ENCODE measurements at regions of chr2 and their contacts with region 1.

Region 1: DNA sequence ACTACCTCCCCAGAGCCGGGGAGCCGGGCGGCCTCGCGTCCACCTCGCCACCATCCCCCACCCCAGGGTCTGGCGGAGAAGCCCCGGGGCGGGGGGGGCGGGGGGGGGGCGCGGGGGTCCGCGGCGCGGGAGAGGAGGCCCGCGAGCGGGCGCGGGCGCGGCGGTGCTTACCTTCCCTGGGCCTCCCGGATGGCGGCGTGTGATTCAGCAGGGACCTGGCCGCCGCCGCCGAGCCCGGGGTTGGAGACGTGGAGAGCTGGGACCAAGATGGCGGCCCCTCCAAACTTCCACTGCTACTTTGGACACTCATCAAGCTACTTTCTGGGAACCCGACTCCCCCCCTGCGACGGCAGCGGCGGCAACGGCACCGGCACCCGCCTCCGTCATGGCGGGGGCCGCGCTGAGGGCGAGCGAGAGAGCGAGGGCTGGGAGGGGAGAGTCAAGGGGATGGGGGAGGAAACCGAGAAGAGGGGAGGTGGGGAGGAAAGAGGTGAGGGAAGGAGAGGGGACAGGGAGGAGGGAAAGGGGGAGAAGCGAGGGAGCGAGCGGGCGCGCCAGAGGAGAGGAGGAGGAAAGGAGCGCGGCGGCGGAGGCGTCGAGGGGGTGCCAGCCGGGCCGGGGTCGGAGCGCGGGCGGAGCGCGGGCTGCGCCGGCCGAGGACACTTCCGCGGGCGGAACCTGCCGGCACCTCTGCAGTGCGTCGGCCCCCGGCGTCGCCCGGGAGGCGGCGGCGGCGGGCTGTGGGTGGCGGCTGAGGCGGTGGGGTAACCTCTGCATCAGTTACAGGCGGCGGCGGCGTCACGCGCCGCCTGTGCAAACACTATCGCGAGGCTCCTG is at the start of gene TLK1:
- DNase-seq: peak; percentile 78 to 84 (median 82)
- H3K4me3 ChIP-seq: peak within 1 kb of the TSS; percentile 78 to 95
- H3K4me3 Mint-ChIP-seq: peak within 1 kb of the TSS; percentile 94 to 99 (median 96)
- H3K27ac ChIP-seq: peak within 1 kb of the TSS; percentile 89
- H3K27ac Mint-ChIP-seq: peak within 1 kb of the TSS; percentile 93 to 98 (median 94)
- H3K4me1 ChIP-seq: peaks cover 72% of the 10 kb centered on the region
- H3K4me1 Mint-ChIP-seq: peaks cover 51 to 77% (median 61%) of the 10 kb centered on the region in 4 donors
- H3K27me3 ChIP-seq: no peaks in the 10 kb centered on the region
- H3K27me3 Mint-ChIP-seq: no peaks in the 10 kb centered on the region
- total RNA-seq, gene TLK1: 138 to 152 TPM

Region 2: DNA sequence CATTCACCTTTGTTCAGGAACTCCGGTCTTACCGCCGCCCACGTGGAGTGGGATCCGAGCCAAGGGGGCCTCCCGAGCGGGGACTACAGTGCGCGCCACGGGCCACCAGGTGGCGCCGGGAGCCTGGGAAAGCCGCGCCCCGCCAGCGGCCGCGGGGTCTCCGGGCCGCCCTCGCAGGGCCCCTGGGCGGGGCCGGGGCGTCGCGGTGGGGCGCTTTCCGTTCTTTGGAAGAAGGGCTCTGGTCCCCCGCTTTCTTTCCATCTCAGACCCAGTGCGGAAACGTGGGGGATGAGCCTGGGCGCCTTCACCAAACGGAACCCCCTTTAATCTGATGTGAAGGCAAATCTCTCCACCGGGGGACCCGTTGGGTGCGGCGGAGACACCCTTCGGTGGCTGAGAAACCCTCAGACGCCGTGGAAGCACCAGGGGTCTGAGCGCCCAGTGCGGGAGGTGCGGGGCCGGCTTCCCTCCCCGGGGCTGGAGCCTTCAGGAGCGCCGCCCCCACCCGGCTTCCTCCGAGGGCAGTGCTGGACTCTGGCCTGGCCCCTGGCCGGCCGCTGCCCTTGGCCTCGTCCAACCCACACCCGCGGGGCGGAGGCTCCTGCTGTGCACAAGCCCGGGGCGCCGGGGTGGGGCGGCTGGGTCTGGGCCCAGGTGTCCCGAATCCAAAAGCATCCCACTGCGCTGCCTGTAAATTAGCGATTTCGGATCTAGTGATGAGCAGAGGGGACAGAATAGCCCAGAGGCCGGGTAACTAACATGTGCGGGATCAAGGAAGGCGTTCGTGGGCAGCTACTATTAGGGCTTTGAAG is 186.6 kb before region 1 on chr2:
- CTCF ChIA-PET with region 1: interaction called, 35 read pairs
- POLR2A ChIA-PET with region 1: interaction called, 32 read pairs
- intact Hi-C with region 1: loop called (anchors 1 kb)
- DNase-seq: peak; percentile 87 to 91 (median 87)
- H3K4me3 ChIP-seq: peak overlapping the region; percentile 26 to 77
- H3K4me3 Mint-ChIP-seq: peak overlapping the region; percentile 81 to 88 (median 84)
- H3K27ac ChIP-seq: peak overlapping the region; percentile 52
- H3K27ac Mint-ChIP-seq: peak overlapping the region; percentile 25 to 90 (median 54)
- H3K4me1 ChIP-seq: peaks cover 14% of the 10 kb centered on the region
- H3K4me1 Mint-ChIP-seq: peaks cover 7 to 16% (median 10%) of the 10 kb centered on the region in 4 donors
- H3K27me3 ChIP-seq: no peaks in the 10 kb centered on the region
- H3K27me3 Mint-ChIP-seq: no peaks in the 10 kb centered on the region

Region 3: GRCh38 chr2:171124541-171124940 is 35.8 kb before region 1 on chr2:
- CTCF ChIA-PET with region 1: no interaction called
- POLR2A ChIA-PET with region 1: interaction called, 3 read pairs
- intact Hi-C with region 1: loop called (anchors 5 kb)
- DNase-seq: no peak
- H3K4me3 ChIP-seq: no peak overlapping the region
- H3K4me3 Mint-ChIP-seq: no peak overlapping the region
- H3K27ac ChIP-seq: no peak overlapping the region
- H3K27ac Mint-ChIP-seq: no peak overlapping the region
- H3K4me1 ChIP-seq: peaks cover 44% of the 10 kb centered on the region
- H3K4me1 Mint-ChIP-seq: peaks cover 42 to 72% (median 60%) of the 10 kb centered on the region in 4 donors
- H3K27me3 ChIP-seq: no peaks in the 10 kb centered on the region
- H3K27me3 Mint-ChIP-seq: no peaks in the 10 kb centered on the region

Region 4: DNA sequence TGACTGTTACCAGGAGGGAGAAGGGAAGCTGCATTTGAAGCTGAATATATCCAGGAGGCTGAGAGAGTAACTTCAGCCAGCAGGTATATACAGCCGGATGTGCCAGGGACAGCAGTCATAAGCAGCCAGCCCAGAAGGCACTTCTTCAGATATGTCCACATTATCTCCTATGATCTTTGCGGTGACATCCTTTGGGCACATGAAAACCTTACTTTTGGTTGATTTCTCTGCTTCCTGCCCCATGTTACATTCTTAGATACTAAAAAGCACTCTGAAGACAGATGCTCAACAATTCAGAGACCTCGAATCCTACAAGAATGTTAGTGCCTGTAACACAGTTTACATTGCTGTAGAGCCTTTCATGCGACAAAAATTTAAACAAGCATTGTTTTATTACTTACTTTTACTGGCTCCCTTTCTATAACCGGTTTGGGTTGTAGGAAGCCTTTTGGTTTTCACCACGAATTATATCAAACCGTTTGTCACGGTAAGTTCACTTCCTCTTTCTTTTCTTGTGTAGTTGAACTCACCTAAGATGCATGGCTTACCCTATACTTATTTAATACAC is 50.6 kb after region 1 on chr2:
- CTCF ChIA-PET with region 1: interaction called, 3 read pairs
- POLR2A ChIA-PET with region 1: interaction called, 5 read pairs
- intact Hi-C with region 1: loop called (anchors 1 kb)
- DNase-seq: peak; percentile 56 to 76 (median 67)
- H3K4me3 ChIP-seq: peak overlapping the region in 1 of 2 donors; percentile 46
- H3K4me3 Mint-ChIP-seq: peak overlapping the region; percentile 73 to 87 (median 78)
- H3K27ac ChIP-seq: peak overlapping the region; percentile 36
- H3K27ac Mint-ChIP-seq: peak overlapping the region; percentile 62 to 90 (median 85)
- H3K4me1 ChIP-seq: peaks cover 17% of the 10 kb centered on the region
- H3K4me1 Mint-ChIP-seq: peaks cover 11 to 26% (median 15%) of the 10 kb centered on the region in 4 donors
- H3K27me3 ChIP-seq: no peaks in the 10 kb centered on the region
- H3K27me3 Mint-ChIP-seq: no peaks in the 10 kb centered on the region

Region 5: DNA sequence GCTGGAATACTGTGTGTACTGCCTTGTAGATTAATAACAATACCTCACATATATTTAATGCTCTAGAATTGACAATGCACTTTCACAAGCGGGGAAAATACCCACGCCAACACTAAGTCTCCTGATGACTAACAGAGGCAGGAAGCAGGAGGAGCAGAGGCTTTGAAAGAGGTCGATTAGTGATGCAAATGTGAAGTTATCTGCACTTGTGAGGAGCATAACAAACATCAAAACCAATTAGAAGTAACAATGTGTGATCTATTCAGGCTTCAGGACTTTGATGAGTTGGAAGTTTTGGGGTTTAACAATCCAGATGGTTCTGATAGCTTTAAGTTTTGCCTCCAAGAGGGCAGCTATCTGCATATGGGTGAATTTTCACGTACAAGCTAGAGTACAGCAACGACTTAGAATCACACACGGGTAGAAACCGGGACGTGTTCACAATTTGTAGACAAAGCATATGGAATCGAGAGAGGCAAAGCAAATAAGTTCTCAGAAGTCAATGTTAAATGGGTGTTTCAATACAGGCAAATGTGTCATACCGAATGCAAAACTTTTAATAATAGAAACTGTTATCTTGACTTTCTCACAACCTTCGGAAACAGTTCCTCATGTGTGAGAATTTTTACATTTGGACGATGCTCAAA is 158.9 kb after region 1 on chr2:
- CTCF ChIA-PET with region 1: interaction called, 6 read pairs
- POLR2A ChIA-PET with region 1: interaction called, 9 read pairs
- intact Hi-C with region 1: loop called (anchors 2 kb)
- DNase-seq: peak; percentile 47 to 75 (median 56)
- H3K4me3 ChIP-seq: no peak overlapping the region
- H3K4me3 Mint-ChIP-seq: peak overlapping the region; percentile 66 to 82 (median 77)
- H3K27ac ChIP-seq: peak overlapping the region; percentile 37
- H3K27ac Mint-ChIP-seq: peak overlapping the region; percentile 43 to 94 (median 77)
- H3K4me1 ChIP-seq: peaks cover 43% of the 10 kb centered on the region
- H3K4me1 Mint-ChIP-seq: peaks cover 41 to 51% (median 48%) of the 10 kb centered on the region in 4 donors
- H3K27me3 ChIP-seq: no peaks in the 10 kb centered on the region
- H3K27me3 Mint-ChIP-seq: no peaks in the 10 kb centered on the region

Region 6: GRCh38 chr2:171433763-171434670 is 273.7 kb after region 1 on chr2 and contains the starts of genes DCAF17 and METTL8:
- CTCF ChIA-PET with region 1: interaction called, 4 read pairs
- POLR2A ChIA-PET with region 1: interaction called, 18 read pairs
- intact Hi-C with region 1: loop called (anchors 1 kb)
- DNase-seq: peak; percentile 92 to 95 (median 94)
- H3K4me3 ChIP-seq: peak within 1 kb of the TSS; percentile 40 to 82
- H3K4me3 Mint-ChIP-seq: peak within 1 kb of the TSS; percentile 84 to 92 (median 90)
- H3K27ac ChIP-seq: peak within 1 kb of the TSS; percentile 91
- H3K27ac Mint-ChIP-seq: peak within 1 kb of the TSS; percentile 79 to 98 (median 96)
- H3K4me1 ChIP-seq: peaks cover 30% of the 10 kb centered on the region
- H3K4me1 Mint-ChIP-seq: peaks cover 32 to 52% (median 40%) of the 10 kb centered on the region in 4 donors
- H3K27me3 ChIP-seq: no peaks in the 10 kb centered on the region
- H3K27me3 Mint-ChIP-seq: no peaks in the 10 kb centered on the region
- total RNA-seq, gene DCAF17: 26.6 to 30.3 TPM
- total RNA-seq, gene METTL8: 17.5 to 19.2 TPM